Caco-2 (cell line): ENCODE measurements at regions of chrX and their contacts with region 1.

Region 1: DNA sequence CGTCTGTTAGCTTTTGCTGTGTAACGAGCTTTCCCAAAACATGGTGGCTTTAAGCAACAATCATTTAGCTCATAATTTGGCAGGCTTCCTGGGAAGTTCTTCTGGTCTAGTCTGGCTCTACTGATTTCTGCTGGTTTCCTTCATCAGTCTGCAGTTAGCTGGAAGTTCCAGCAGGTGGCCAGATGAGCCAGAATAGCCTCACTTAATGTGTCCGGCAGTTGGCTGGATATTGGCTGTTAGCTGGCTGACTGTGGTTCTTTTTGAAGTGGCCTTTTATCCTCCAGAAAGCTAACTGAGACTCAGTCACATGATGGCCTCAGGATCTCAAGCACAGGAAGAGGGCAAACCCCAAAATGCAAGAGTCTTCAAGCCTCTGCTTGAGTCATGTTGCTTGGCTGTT is 34.9 kb downstream of the FTHL17 start:
- DNase-seq: peak; percentile 38 to 41
- H3K4me3 ChIP-seq: no peak overlapping the region
- H3K4me3 Mint-ChIP-seq: no peak overlapping the region
- H3K27ac Mint-ChIP-seq: no peak overlapping the region
- H3K4me1 ChIP-seq: no peaks in the 10 kb centered on the region
- H3K4me1 Mint-ChIP-seq: peaks cover 8% of the 10 kb centered on the region
- H3K27me3 ChIP-seq: no peaks in the 10 kb centered on the region
- H3K27me3 Mint-ChIP-seq: no peaks in the 10 kb centered on the region
- CTCF ChIP-seq: peak; percentile 42 to 68

Region 2: GRCh38 chrX:30935985-30936384 is 100.9 kb before region 1 on chrX:
- CTCF ChIA-PET with region 1: interaction called, 6 read pairs
- POLR2A ChIA-PET with region 1: no interaction called
- intact Hi-C with region 1: loop called (anchors 1 kb)
- DNase-seq: peak; percentile 62 to 65
- H3K4me3 ChIP-seq: no peak overlapping the region
- H3K4me3 Mint-ChIP-seq: no peak overlapping the region
- H3K27ac Mint-ChIP-seq: peak overlapping the region; percentile 19
- H3K4me1 ChIP-seq: peaks cover 55% of the 10 kb centered on the region
- H3K4me1 Mint-ChIP-seq: peaks cover 25% of the 10 kb centered on the region
- H3K27me3 ChIP-seq: no peaks in the 10 kb centered on the region
- H3K27me3 Mint-ChIP-seq: no peaks in the 10 kb centered on the region
- CTCF ChIP-seq: peak in 1 of 2 experiments; percentile 33

Region 3: DNA sequence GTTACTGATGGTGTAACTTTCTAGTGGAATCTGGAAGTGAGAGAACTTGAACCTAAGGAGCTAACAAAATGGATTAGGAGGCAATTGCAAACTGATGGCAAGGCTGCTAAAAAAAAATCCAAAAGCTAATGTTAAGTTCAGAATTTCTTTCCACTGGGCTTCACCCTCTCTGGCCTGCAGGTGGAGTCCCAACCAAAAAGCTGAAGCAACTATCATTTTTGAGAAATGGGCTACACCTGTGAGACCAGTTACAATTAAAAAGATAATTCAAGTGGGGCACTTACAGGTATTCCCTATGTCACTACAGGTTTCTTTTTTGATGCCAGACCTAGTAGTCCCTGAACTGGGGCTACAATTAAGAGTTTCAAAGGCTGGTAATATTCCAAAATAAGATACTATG is 177.0 kb after region 1 on chrX:
- CTCF ChIA-PET with region 1: no interaction called
- POLR2A ChIA-PET with region 1: no interaction called
- intact Hi-C with region 1: loop called (anchors 5 kb)
- DNase-seq: peak in 1 of 2 experiments; percentile 25
- H3K4me3 ChIP-seq: no peak overlapping the region
- H3K4me3 Mint-ChIP-seq: no peak overlapping the region
- H3K27ac Mint-ChIP-seq: no peak overlapping the region
- H3K4me1 ChIP-seq: no peaks in the 10 kb centered on the region
- H3K4me1 Mint-ChIP-seq: peaks cover 13% of the 10 kb centered on the region
- H3K27me3 ChIP-seq: no peaks in the 10 kb centered on the region
- H3K27me3 Mint-ChIP-seq: no peaks in the 10 kb centered on the region
- CTCF ChIP-seq: peak; percentile 36 to 62

Region 4: DNA sequence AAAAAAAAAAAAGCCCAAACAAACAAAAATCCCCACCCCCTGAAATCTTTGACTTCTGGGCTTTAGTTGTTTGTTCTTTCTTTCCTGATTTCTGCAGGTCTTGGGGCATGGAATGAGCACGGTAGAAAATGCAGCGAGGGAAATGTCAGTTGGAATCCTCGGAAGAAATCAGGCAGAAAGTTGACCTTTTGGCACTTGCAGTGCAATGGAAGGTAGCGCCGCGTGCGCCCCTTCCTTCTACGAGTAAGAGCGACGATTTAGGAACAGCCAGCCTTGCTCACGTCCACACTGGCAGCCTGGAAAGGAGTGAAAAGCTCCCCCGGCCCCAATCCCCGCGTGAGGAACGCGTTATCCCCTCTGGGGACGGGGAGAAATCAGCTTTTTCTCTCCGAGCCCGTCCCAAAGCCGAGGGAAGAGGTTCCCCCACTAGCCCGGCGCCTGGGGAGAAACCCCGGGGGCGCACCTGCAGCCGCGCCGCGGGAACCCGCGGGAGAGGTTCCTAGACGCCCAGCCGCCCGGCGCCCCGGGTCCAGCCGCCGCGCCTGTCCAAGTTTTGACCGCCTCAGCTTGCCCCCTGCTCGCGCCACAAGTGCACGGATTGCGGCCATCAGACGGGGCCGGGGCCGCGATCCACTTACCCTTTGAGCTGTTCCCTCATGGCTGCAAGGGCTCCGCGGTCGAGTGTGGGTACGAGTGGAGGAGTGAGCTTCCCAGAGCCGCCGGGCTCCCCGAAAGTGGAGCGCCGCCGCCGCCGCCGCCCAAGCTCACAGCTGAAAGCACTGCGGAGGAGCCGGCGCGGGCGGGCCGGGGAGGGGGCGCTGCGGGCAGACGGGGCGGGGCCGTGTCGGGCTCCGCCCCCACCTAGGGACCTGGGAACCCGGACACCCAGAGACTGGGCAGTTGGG is 229.5 kb after region 1 on chrX:
- CTCF ChIA-PET with region 1: interaction called, 7 read pairs
- POLR2A ChIA-PET with region 1: no interaction called
- intact Hi-C with region 1: loop called (anchors 5 kb)
- DNase-seq: peak; percentile 47 to 67
- H3K4me3 ChIP-seq: peak overlapping the region; percentile 82
- H3K4me3 Mint-ChIP-seq: peak overlapping the region; percentile 85
- H3K27ac Mint-ChIP-seq: peak overlapping the region; percentile 73
- H3K4me1 ChIP-seq: no peaks in the 10 kb centered on the region
- H3K4me1 Mint-ChIP-seq: peaks cover 11% of the 10 kb centered on the region
- H3K27me3 ChIP-seq: no peaks in the 10 kb centered on the region
- H3K27me3 Mint-ChIP-seq: no peaks in the 10 kb centered on the region
- CTCF ChIP-seq: no peak

Region 5: DNA sequence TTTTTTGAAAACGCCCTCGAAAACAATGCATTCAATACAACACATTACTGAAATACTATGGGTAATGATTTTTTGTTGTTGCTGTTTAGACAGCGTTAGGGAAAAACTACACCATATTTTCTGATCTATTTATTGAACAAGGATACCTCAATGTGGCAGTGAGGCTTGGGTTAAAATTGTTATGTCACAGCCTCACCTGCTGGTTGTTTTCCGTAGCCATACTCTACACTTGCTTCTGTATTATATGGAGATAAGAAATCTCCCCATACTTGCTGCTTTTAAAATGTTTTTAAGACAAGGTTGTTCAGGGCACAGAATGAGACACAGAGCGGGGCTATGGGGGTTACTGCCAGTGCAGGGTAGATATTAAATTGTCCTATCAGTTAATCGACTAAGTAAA is 256.5 kb after region 1 on chrX:
- CTCF ChIA-PET with region 1: interaction called, 3 read pairs
- POLR2A ChIA-PET with region 1: no interaction called
- intact Hi-C with region 1: loop called (anchors 1 kb)
- DNase-seq: no peak
- H3K4me3 ChIP-seq: no peak overlapping the region
- H3K4me3 Mint-ChIP-seq: no peak overlapping the region
- H3K27ac Mint-ChIP-seq: no peak overlapping the region
- H3K4me1 ChIP-seq: no peaks in the 10 kb centered on the region
- H3K4me1 Mint-ChIP-seq: no peaks in the 10 kb centered on the region
- H3K27me3 ChIP-seq: no peaks in the 10 kb centered on the region
- H3K27me3 Mint-ChIP-seq: no peaks in the 10 kb centered on the region
- CTCF ChIP-seq: peak in 1 of 2 experiments; percentile 30

Region 6: GRCh38 chrX:31423609-31424189 is 386.8 kb after region 1 on chrX:
- CTCF ChIA-PET with region 1: no interaction called
- POLR2A ChIA-PET with region 1: no interaction called
- intact Hi-C with region 1: loop called (anchors 1 kb)
- DNase-seq: peak; percentile 24 to 29
- H3K4me3 ChIP-seq: no peak overlapping the region
- H3K4me3 Mint-ChIP-seq: no peak overlapping the region
- H3K27ac Mint-ChIP-seq: no peak overlapping the region
- H3K4me1 ChIP-seq: no peaks in the 10 kb centered on the region
- H3K4me1 Mint-ChIP-seq: peaks cover 6% of the 10 kb centered on the region
- H3K27me3 ChIP-seq: no peaks in the 10 kb centered on the region
- H3K27me3 Mint-ChIP-seq: no peaks in the 10 kb centered on the region
- CTCF ChIP-seq: peak; percentile 12 to 37

Region 7: DNA sequence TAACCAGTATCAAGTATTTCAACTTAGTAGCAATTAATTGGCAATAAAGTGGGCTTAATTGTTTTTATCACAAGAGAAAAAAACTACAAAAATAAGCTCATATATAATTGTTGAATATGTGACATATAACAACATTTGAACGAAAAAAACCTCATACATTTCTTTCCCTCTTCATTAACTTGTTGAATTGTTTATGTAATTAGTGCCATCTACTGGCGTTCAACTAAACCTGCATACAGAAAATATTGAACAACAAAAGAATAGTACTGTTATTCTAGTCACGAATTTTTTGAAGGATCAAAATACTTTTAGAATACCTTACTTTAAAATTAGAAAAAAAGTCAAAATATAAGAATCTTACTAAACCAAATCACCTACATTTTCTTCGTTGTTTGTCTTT is 621.5 kb after region 1 on chrX:
- CTCF ChIA-PET with region 1: no interaction called
- POLR2A ChIA-PET with region 1: no interaction called
- intact Hi-C with region 1: loop called (anchors 1 kb)
- DNase-seq: no peak
- H3K4me3 ChIP-seq: no peak overlapping the region
- H3K4me3 Mint-ChIP-seq: no peak overlapping the region
- H3K27ac Mint-ChIP-seq: no peak overlapping the region
- H3K4me1 ChIP-seq: no peaks in the 10 kb centered on the region
- H3K4me1 Mint-ChIP-seq: no peaks in the 10 kb centered on the region
- H3K27me3 ChIP-seq: no peaks in the 10 kb centered on the region
- H3K27me3 Mint-ChIP-seq: no peaks in the 10 kb centered on the region
- CTCF ChIP-seq: peak; percentile 28 to 40